ENCODE measurements at regions of chr10 and their contacts with region 1.

Region 1: DNA sequence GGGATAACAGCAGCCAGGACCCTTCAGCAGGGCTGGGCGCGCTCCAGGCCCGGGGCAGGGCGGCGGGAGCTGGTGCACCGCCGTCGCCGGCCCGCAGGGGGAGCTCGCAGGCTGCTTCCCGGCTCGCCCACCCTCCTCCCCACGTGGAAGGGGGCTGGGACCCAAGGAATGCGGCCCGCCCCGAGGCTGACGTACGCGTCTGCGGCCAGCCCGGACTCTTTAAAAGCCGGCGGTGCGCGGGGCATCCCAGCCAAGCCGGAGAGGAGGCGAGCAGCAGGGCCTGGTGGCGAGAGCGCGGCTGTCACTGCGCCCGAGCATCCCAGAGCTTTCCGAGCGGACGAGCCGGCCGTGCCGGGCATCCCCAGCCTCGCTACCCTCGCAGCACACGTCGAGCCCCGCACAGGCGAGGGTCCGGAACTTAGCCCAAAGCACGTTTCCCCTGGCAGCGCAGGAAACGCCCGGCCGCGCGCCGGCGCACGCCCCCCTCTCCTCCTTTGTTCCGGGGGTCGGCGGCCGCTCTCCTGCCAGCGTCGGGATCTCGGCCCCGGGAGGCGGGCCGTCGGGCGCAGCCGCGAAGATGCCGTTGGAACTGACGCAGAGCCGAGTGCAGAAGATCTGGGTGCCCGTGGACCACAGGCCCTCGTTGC is at the start of gene PFKFB3:
- DNase-seq: peak; percentile 98 to 99
- ATAC-seq: peak; percentile 95
- H3K4me3 ChIP-seq: peak within 1 kb of the TSS; percentile 74 to 97
- H3K27ac ChIP-seq: peak within 1 kb of the TSS; percentile 79 to 85
- H3K4me1 ChIP-seq: peaks cover 0 to 3% of the 10 kb centered on the region in 2 donors
- H3K27me3 ChIP-seq: no peaks in the 10 kb centered on the region
- total RNA-seq, gene PFKFB3: 116 to 140 TPM

Region 2: GRCh38 chr10:6108603-6109443 is 94.0 kb before region 1 on chr10:
- intact Hi-C with region 1: loop called (anchors 5 kb)
- DNase-seq: no peak
- ATAC-seq: peak; percentile 73
- H3K4me3 ChIP-seq: no peak overlapping the region
- H3K27ac ChIP-seq: no peak overlapping the region
- H3K4me1 ChIP-seq: no peaks in the 10 kb centered on the region
- H3K27me3 ChIP-seq: no peaks in the 10 kb centered on the region

Region 3: GRCh38 chr10:6151087-6151977 is 51.5 kb before region 1 on chr10:
- intact Hi-C with region 1: loop called in 1 of 2 experiments (anchors 5 kb)
- DNase-seq: peak in 1 of 2 donors; percentile 86
- ATAC-seq: peak; percentile 69
- H3K4me3 ChIP-seq: no peak overlapping the region
- H3K27ac ChIP-seq: no peak overlapping the region
- H3K4me1 ChIP-seq: no peaks in the 10 kb centered on the region
- H3K27me3 ChIP-seq: no peaks in the 10 kb centered on the region

Region 4: GRCh38 chr10:6164271-6165095 is 38.3 kb before region 1 on chr10:
- intact Hi-C with region 1: loop called in 1 of 2 experiments (anchors 5 kb)
- DNase-seq: peak in 1 of 2 donors; percentile 21
- ATAC-seq: no peak
- H3K4me3 ChIP-seq: peak overlapping the region; percentile 44 to 66
- H3K27ac ChIP-seq: peak overlapping the region; percentile 9 to 64
- H3K4me1 ChIP-seq: no peaks in the 10 kb centered on the region
- H3K27me3 ChIP-seq: no peaks in the 10 kb centered on the region

Region 5: DNA sequence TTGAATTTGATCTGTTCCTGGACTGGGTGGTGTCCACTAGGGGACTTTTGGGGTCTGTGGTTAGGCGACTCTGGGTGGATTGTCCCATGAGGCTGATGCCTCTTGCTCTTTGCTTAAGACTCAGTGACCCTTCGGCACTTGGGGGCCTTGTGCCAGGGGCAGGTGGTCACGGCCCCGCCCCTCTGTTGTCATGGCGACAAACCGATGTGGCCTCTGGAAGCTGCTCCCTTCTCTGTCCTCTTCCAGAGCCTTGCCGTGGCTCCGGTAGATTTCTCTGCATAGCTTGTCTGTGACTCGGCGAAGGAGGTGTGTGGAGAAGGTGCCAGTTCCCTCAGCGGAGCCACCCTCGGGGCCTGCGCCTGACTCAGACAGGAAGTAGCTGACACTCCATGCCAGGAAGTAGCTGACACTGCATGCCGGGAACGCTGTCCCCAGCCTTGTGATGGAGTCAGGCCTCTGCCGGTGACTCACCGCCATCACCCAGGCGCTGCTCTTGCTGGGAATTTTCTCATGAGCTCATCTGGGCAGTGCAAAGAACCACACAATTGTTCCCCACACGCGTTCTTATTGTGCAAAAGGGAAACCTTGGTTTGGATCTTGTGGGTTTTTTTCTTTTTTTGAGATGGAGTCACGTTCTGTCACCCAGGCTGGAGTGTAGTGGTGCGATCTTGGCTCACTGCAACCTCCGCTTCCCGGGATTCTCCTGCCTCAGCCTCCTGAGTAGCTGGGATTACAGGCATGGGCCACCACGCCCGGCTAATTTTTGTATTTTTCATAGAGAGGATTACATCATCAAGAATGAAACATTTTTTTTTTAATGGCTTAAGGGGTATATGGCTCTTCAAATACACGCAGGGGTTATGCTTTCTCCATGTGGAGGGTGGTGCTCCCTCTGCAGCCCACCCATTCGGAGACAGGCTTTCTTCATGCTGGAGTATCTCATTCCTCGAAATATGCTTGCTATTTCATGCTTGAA is 72.5 kb after region 1 on chr10:
- intact Hi-C with region 1: loop called in 1 of 2 experiments (anchors 5 kb)
- DNase-seq: peak; percentile 97 to 99
- ATAC-seq: peak; percentile 95
- H3K4me3 ChIP-seq: no peak overlapping the region
- H3K27ac ChIP-seq: peak overlapping the region; percentile 79 to 100
- H3K4me1 ChIP-seq: peaks cover 2 to 4% of the 10 kb centered on the region in 2 donors
- H3K27me3 ChIP-seq: no peaks in the 10 kb centered on the region

Region 6: DNA sequence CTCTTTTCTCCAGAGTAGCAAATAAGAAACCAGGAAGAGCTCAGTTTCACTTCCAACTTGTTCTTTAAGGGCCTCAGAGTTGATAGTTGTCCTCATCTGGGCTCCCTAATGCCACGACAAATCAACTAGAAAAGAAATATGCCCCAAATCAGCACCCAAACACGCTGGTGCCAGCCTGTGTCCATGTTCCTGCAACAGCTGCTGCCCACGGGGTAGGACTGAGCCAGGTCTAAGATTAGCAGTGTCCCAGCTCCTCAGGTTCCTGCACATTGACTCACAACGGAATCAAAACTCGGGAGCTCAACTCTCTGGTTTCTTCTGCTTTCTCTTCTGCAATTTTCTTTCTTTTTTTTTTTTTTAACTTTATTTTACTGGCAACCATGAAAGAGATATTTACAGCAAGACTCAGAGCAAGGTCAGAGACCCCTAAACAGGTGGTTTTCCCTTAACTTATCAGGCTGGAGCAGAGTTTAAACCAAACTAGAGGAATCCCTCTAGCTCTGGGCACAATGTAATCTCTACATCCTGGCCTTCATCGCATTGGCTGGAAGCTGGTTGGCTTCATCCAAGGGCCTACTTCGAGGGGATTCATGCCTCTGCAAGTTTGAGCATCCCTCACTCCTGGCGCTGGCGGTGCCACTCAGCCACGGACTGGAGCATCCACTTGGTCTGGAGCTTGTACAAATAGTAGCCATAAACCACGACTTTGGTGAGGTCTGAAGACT is 126.1 kb after region 1 on chr10:
- intact Hi-C with region 1: loop called in 1 of 2 experiments (anchors 5 kb)
- DNase-seq: peak; percentile 71 to 84
- ATAC-seq: peak; percentile 78
- H3K4me3 ChIP-seq: no peak overlapping the region
- H3K27ac ChIP-seq: peak overlapping the region; percentile 76 to 95
- H3K4me1 ChIP-seq: peaks cover 6 to 10% of the 10 kb centered on the region in 2 donors
- H3K27me3 ChIP-seq: no peaks in the 10 kb centered on the region

Region 7: DNA sequence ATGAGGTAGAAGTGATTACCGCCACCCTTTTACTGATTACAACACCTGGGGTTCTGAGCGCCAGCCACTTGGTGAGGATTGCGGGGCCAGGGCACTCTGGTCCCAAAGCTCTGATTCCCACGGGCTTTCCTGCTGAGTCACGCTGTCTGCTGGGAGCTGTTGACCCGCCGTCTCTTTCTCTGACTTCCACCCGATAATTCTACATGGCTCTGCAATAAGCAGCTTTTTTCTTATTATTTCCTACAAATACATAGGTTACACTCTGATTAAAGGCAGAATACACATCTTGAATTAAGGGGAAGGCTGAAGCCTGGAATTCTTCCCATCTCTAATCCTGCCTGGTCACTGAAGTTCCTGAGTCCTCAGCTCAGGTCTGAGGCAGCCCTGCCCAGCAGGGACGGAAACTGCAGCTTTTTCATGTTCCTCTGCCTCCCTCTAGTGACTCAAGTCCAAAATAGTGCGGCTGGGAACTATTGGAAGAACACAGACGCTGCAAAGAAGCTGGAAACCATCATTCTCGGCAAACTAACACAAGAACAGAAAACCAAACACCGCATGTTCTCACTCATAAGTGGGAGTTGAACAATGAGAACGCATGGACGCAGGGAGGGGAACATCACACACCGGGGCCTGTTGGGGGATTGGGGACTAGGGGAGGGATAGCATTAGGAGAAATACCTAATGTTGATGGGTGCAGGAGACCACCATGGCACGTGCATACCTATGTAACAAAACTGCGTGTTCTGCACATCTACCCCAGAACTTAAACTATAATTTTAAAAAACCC is 198.9 kb after region 1 on chr10:
- intact Hi-C with region 1: loop called (anchors 2 kb)
- DNase-seq: peak; percentile 85 to 87
- ATAC-seq: peak; percentile 95
- H3K4me3 ChIP-seq: peak overlapping the region in 1 of 2 donors; percentile 47
- H3K27ac ChIP-seq: peak overlapping the region in 1 of 2 donors; percentile 27
- H3K4me1 ChIP-seq: no peaks in the 10 kb centered on the region
- H3K27me3 ChIP-seq: no peaks in the 10 kb centered on the region

Measured in aorta (tissue), 5 donors.